ENCODE measurements at regions of chr1 and their contacts with region 1.

Region 1: DNA sequence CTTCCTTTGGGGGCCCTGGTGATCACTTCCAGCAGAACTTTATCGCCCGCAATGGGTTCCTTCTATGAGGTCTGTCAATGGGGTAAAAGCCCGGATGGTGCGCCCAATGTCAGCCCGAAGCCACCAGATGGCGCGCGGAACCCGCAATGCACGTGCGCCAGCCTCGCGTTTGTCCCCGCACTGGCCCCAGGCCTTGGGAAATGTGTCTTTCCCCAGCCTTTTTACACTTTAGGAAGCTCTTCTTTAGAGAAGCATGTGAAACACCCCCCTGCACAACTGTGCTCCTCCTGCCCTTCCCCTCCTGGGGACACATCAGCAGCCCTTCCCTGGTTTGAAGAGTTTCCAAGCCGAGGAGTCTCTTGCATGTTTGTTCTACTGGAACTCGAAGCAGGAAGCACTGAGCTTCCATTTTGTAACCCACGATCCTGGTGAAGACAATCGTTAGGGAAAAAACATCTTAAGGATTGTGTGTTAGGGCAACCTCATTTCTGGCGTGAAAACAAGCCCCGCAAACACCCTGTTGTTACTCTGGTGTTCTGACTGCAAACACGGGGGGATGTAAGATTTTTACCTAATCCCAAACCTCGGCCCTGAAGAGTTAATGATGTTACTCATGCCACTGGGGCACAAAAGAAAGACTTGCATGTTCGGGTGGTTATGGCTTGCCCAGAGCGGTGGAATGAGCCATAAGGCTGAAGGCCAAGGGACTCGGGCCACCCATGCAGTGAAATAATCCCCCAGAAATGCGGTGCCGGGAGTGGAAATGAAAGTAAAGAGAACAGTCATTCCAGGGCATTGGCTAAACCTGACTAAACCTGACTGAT is 20.4 kb upstream of the TARBP1 start:
- DNase-seq: no peak
- H3K4me3 ChIP-seq: peak overlapping the region; percentile 18; the same call in 1 of the 2 replicates
- CTCF ChIP-seq: peak; percentile 96

Region 2: GRCh38 chr1:234509452-234510328 is 10.4 kb after region 1 on chr1:
- CTCF ChIA-PET with region 1: interaction called, 17 read pairs
- POLR2A ChIA-PET with region 1: no interaction called
- DNase-seq: no peak
- H3K4me3 ChIP-seq: no peak overlapping the region
- CTCF ChIP-seq: no peak

Region 3: GRCh38 chr1:234589854-234590620 is 90.7 kb after region 1 on chr1:
- CTCF ChIA-PET with region 1: interaction called, 10 read pairs
- POLR2A ChIA-PET with region 1: no interaction called
- DNase-seq: no peak
- H3K4me3 ChIP-seq: no peak overlapping the region
- CTCF ChIP-seq: no peak

Region 4: DNA sequence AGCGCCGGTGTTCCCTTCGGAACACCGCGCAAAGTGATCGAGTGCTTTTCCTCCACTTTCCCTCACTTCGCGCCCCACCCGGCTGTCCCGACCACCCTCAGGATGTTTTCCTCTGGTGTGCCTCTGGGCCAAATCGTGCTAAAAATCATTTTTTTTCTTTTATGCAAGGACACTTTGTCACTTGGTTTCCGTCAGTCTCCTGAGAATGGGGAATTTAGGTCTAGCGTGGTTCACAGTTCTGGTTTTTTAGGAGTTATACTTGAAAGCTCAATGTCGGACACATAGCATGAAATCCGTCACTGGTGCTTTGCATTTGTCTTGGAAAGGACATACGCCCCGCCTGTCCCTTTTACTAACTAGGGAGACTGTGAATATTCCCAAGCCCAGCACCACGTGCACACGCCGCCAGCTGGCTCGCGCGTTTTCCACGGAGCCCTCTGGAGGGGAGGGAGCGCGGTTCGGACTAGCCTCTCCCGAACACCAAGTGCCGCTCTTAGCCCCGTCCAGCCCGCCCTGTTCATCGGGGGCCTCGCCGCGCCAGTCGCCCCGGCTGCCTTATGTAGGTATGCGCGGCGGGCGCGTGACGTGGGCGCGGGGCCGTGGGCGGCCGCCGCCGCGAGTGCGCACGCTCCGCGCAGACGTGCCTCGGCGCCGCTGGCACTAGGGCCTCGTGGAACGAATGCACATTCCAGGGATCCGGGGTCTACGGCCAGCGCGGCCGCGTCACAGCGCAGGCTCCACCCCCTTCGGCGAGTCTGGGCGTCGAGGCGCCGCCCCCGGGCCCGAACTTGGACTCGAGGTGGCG is 111.2 kb after region 1 on chr1:
- CTCF ChIA-PET with region 1: interaction called, 39 read pairs
- POLR2A ChIA-PET with region 1: interaction called, 4 read pairs
- DNase-seq: no peak
- H3K4me3 ChIP-seq: peak overlapping the region; percentile 63
- CTCF ChIP-seq: peak; percentile 19

Region 5: GRCh38 chr1:235093696-235094592 is 594.6 kb after region 1 on chr1:
- CTCF ChIA-PET with region 1: interaction called, 46 read pairs
- POLR2A ChIA-PET with region 1: no interaction called
- DNase-seq: no peak
- H3K4me3 ChIP-seq: no peak overlapping the region
- CTCF ChIP-seq: peak; percentile 87